GM12878 (cell line): ENCODE measurements at regions of chr17 and their contacts with region 1.

Region 1: DNA sequence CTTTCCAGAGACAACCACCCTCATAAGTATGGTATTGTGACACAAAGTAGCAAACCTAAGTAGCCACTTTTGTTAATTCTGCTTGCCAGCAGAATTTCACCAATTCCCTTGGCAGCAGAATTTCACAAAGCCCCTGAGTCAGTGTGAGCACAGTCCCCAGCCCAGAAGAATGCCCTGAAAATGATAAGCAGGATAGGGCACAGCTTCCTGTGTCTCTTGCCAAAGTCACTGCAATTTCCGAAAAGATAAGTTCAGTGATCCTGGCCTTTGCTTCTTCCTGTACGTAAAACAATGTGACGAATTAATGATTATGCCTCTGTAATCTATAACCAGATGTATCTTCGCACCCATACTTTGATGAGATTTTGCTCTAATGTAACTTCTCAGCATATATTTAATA is 16.0 kb upstream of the WIPF2 start:
- DNase-seq: no peak
- ATAC-seq: no peak
- H3K4me3 ChIP-seq: no peak overlapping the region
- H3K27ac ChIP-seq: no peak overlapping the region
- H3K4me1 ChIP-seq: no peaks in the 10 kb centered on the region
- H3K27me3 ChIP-seq: no peaks in the 10 kb centered on the region
- CTCF ChIP-seq: no peak
- EP300 ChIP-seq: no peak
- POLR2A ChIP-seq: no peak
- RAD21 ChIP-seq: no peak

Region 2: GRCh38 chr17:39952680-39953470 is 250.3 kb before region 1 on chr17:
- CTCF ChIA-PET with region 1: no interaction called
- POLR2A ChIA-PET with region 1: no interaction called
- RAD21 ChIA-PET with region 1: no interaction called
- SMC1A ChIA-PET with region 1: no interaction called
- in situ Hi-C with region 1: no loop called
- intact Hi-C with region 1: no loop called
- DNase-seq: peak; percentile 79
- ATAC-seq: peak; percentile 97
- H3K4me3 ChIP-seq: peak overlapping the region; percentile 76
- H3K27ac ChIP-seq: peak overlapping the region; percentile 40; the same call in 1 of the 2 replicates
- H3K4me1 ChIP-seq: peaks cover 3% of the 10 kb centered on the region; the same call in 1 of the 2 replicates
- H3K27me3 ChIP-seq: no peaks in the 10 kb centered on the region
- CTCF ChIP-seq: no peak
- EP300 ChIP-seq: no peak
- POLR2A ChIP-seq: peak; percentile 81; the same call in 1 of the 2 replicates
- RAD21 ChIP-seq: no peak

Region 3: DNA sequence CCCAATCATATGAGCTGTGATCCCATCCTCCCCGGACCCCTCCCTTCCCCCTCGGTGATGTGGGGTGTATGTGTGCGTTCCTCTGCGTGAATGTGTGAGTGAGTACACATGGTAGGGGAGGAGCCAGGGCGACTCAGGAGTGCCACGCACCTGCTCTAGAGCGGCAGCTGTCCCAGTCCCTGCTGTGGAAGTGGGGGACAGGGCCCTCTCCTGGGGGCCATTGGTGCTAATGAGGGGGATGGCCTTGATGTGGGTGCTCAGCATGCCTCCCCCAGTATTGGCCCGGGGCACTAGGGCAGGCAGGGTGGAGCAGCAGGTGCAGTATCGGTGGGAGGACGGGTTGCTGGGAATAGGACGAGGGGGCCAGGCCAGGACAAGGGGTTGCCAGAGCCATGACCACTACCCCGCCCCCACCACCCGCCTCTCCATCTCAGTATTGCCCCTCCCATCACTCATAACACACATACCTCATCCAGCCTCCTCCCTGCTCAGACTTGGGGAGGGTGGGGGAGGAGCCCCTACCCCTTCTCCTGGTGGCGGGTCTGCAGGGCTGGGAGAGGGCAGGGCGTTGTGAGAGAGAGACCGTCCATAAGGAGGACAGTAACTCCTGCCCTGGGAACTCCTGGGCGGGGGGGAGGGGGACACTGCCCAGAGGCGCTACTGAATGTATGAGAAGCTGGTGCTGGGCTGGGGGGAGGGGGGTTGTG is 111.3 kb before region 1 on chr17:
- CTCF ChIA-PET with region 1: no interaction called
- POLR2A ChIA-PET with region 1: no interaction called
- RAD21 ChIA-PET with region 1: no interaction called
- SMC1A ChIA-PET with region 1: no interaction called
- in situ Hi-C with region 1: no loop called
- intact Hi-C with region 1: no loop called
- DNase-seq: no peak
- ATAC-seq: no peak
- H3K4me3 ChIP-seq: no peak overlapping the region
- H3K27ac ChIP-seq: no peak overlapping the region
- H3K4me1 ChIP-seq: peaks cover 11% of the 10 kb centered on the region
- H3K27me3 ChIP-seq: no peaks in the 10 kb centered on the region
- CTCF ChIP-seq: no peak
- EP300 ChIP-seq: no peak
- POLR2A ChIP-seq: no peak; the same call in 1 of the 2 replicates
- RAD21 ChIP-seq: no peak

Region 4: DNA sequence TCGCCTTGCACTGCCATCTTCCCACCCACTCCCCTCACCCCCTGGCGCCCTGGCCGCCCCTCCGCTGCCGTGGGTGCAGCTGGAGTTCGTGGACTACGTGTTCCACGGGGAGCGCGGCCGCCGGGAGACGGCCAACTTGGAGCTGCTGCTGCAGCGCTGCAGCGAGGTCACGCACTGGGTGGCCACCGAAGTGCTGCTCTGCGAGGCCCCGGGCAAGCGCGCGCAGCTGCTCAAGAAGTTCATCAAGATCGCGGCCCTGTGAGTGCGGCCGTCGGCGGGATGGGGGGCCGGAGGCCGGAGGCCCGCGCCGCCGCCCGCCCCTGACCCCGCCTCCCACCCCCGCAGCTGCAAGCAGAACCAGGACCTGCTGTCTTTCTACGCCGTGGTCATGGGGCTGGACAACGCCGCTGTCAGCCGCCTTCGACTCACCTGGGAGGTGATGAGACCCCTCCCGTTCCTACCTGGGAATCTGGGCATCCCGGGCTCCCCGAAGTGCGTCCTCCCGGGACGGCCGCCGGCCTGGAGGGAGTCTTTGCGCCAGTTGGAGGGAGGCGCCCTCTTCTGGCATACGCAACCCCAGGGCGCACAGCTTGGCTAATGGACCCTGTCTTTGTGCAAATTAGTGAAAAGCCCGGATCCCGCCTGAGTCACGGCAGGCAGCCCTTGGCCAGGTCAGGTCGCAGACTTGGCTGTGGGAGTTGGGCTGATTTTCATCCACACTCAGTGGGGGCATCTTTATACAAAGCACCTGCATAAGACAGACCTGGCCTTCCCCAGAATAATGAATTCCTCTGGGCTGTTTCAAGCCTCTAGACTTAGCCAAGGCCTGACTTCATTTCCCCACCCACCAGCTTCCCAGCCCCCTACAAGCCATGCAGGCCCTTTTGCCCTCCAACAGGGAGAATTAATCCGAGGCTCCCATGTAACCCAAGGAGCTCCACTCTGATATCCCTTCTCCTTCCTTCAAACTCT is 11.6 kb before region 1 on chr17:
- CTCF ChIA-PET with region 1: interaction called, 13 read pairs
- POLR2A ChIA-PET with region 1: interaction called, 9 read pairs
- RAD21 ChIA-PET with region 1: interaction called, 3 read pairs
- SMC1A ChIA-PET with region 1: interaction called, 5 read pairs
- in situ Hi-C with region 1: no loop called
- intact Hi-C with region 1: no loop called
- DNase-seq: peak; percentile 30
- ATAC-seq: peak; percentile 93
- H3K4me3 ChIP-seq: peak overlapping the region; percentile 83
- H3K27ac ChIP-seq: no peak overlapping the region
- H3K4me1 ChIP-seq: peaks cover 24% of the 10 kb centered on the region
- H3K27me3 ChIP-seq: no peaks in the 10 kb centered on the region; a peak in 1 of 4 replicates
- CTCF ChIP-seq: peak; percentile 82 to 91 (median 89)
- EP300 ChIP-seq: no peak
- POLR2A ChIP-seq: peak; percentile 57
- RAD21 ChIP-seq: peak; percentile 50; the same call in 1 of the 2 replicates

Region 5: GRCh38 chr17:40219073-40219860 is 16.1 kb after region 1 on chr17 and contains the start of gene WIPF2:
- CTCF ChIA-PET with region 1: interaction called, 24 read pairs
- POLR2A ChIA-PET with region 1: interaction called, 4 read pairs
- RAD21 ChIA-PET with region 1: interaction called, 8 read pairs
- SMC1A ChIA-PET with region 1: interaction called, 9 read pairs
- in situ Hi-C with region 1: no loop called
- intact Hi-C with region 1: no loop called
- DNase-seq: peak; percentile 87
- ATAC-seq: peak; percentile 96
- H3K4me3 ChIP-seq: peak within 1 kb of the TSS; percentile 99
- H3K27ac ChIP-seq: peak within 1 kb of the TSS; percentile 73
- H3K4me1 ChIP-seq: peaks cover 4% of the 10 kb centered on the region; the same call in 1 of the 2 replicates
- H3K27me3 ChIP-seq: no peaks in the 10 kb centered on the region
- CTCF ChIP-seq: peak; percentile 33 to 45 (median 37); a peak in 4 of 6 replicates
- EP300 ChIP-seq: no peak
- POLR2A ChIP-seq: peak; percentile 82
- RAD21 ChIP-seq: no peak
- polyA plus RNA-seq, gene WIPF2: 4.2 to 5.5 TPM

Region 6: GRCh38 chr17:40259505-40259904 is 56.4 kb after region 1 on chr17:
- CTCF ChIA-PET with region 1: interaction called, 11 read pairs
- POLR2A ChIA-PET with region 1: interaction called, 5 read pairs
- RAD21 ChIA-PET with region 1: no interaction called
- SMC1A ChIA-PET with region 1: interaction called, 3 read pairs
- in situ Hi-C with region 1: no loop called
- intact Hi-C with region 1: no loop called
- DNase-seq: no peak
- ATAC-seq: no peak
- H3K4me3 ChIP-seq: no peak overlapping the region
- H3K27ac ChIP-seq: no peak overlapping the region
- H3K4me1 ChIP-seq: no peaks in the 10 kb centered on the region
- H3K27me3 ChIP-seq: no peaks in the 10 kb centered on the region
- CTCF ChIP-seq: no peak
- EP300 ChIP-seq: no peak
- POLR2A ChIP-seq: no peak
- RAD21 ChIP-seq: no peak

Region 7: DNA sequence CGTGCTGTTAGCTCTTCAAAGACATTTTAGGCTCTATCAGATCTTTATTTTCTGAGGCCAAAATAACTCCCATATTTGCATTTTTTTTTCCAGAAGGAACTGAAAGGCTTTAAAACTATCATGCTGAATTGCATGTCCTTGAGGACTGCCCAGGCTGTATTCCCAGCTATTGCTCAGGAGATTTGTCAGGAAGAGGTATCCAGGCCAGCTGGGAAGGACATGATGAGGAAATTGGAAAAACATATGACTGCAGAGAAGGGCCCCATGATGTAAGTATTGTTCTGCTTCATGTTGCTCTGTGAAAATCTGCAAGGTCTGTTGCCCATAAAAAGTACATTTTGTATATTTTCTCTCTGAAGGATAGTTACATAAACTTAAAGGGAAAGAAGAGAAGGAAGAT is 90.2 kb after region 1 on chr17:
- CTCF ChIA-PET with region 1: interaction called, 186 read pairs
- POLR2A ChIA-PET with region 1: interaction called, 15 read pairs
- RAD21 ChIA-PET with region 1: interaction called, 44 read pairs
- SMC1A ChIA-PET with region 1: interaction called, 30 read pairs
- in situ Hi-C with region 1: no loop called
- intact Hi-C with region 1: loop called (anchors 1 kb)
- DNase-seq: no peak
- ATAC-seq: no peak
- H3K4me3 ChIP-seq: no peak overlapping the region; the same call in 1 of the 2 replicates
- H3K27ac ChIP-seq: no peak overlapping the region
- H3K4me1 ChIP-seq: peaks cover 9% of the 10 kb centered on the region
- H3K27me3 ChIP-seq: no peaks in the 10 kb centered on the region
- CTCF ChIP-seq: no peak
- EP300 ChIP-seq: no peak
- POLR2A ChIP-seq: no peak
- RAD21 ChIP-seq: no peak